ENCODE measurements at regions of chr4 and their contacts with region 1.

Region 1: DNA sequence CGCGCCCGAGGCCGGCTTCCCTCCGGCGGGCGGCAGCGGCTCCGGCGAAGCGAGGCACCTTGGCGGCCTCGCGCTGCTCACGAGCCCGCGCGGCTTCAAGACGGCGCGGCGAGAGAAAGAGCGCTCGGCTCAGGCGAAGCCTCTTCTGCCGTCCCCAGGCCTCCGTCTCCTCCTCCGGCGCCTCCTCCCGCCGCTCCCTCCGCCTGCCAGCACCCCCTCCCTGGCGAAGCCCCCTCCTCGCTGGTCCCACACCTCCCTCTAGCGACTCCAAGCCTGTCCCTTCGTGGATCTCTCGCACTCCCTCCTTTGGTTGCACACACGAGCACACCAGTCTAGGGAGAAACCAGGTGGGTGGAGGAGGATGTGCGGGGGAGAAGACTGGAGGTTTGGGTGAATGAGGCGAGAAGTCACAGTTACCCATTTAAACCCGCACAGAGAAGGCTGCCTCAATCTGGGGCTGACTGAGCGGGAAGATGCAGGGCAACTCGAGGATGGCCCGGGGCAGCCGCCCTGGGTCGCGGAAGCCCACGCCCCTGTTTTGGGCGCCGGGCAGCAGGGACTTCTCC is at the start of gene CAMK2D:
- DNase-seq: peak; percentile 89
- ATAC-seq: peak; percentile 50
- H3K4me3 ChIP-seq: peak within 1 kb of the TSS; percentile 93
- H3K27ac ChIP-seq: peak within 1 kb of the TSS; percentile 90
- H3K4me1 ChIP-seq: 0 out of 2 replicates have a peak, but pooled peaks cover 1% of the 10 kb centered on the region
- H3K27me3 ChIP-seq: no peaks in the 10 kb centered on the region
- CTCF ChIP-seq: peak; percentile 75
- POLR2A ChIP-seq: no peak; the same call in 1 of the 2 replicates
- RAD21 ChIP-seq: peak; percentile 66
- total RNA-seq, gene CAMK2D: 156 and 181 TPM in 2 replicates

Region 2: GRCh38 chr4:112956484-112956896 is 805.2 kb before region 1 on chr4:
- CTCF ChIA-PET with region 1: no interaction called
- POLR2A ChIA-PET with region 1: no interaction called
- dilution Hi-C with region 1: no loop called
- in situ Hi-C with region 1: no loop called
- intact Hi-C with region 1: no loop called
- DNase-seq: no peak
- ATAC-seq: no peak
- H3K4me3 ChIP-seq: no peak overlapping the region
- H3K27ac ChIP-seq: no peak overlapping the region
- H3K4me1 ChIP-seq: no peaks in the 10 kb centered on the region
- H3K27me3 ChIP-seq: no peaks in the 10 kb centered on the region
- CTCF ChIP-seq: no peak
- POLR2A ChIP-seq: no peak
- RAD21 ChIP-seq: no peak

Region 3: DNA sequence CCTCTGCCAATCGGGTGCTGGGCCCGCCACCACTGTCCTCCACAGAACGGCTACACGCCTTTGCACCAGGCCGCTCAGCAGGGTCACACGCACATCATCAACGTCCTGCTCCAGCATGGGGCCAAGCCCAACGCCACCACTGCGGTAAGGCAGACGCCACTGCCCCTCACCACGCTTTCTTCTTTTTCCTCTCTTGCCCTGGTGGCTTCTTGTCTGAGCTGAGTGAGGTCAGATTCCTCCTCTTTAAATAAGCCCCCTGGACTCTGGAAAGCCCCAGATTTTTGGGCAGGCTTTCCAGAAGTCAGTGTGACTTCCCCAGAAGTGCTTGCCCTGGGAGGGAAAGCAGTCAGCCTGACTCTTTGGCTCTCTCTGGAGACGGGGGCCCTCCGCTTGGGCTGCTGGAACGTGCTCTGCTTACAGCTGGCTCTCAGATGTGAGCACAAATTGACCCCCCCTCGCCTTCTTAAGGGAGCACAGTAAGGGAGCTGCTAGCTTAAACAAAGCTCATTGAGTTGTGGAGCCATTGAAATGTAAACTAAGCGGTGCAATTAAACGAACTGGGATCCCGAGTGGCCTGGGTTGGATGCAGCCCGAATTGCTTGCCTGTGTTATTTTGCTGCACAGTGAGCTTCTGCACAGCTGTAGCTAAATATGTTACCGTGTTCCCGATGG is 469.2 kb before region 1 on chr4:
- CTCF ChIA-PET with region 1: no interaction called
- POLR2A ChIA-PET with region 1: no interaction called
- dilution Hi-C with region 1: no loop called
- in situ Hi-C with region 1: no loop called
- intact Hi-C with region 1: loop called (anchors 5 kb)
- DNase-seq: peak; percentile 71
- ATAC-seq: peak; percentile 82
- H3K4me3 ChIP-seq: no peak overlapping the region
- H3K27ac ChIP-seq: peak overlapping the region; percentile 66; the same call in 1 of the 2 replicates
- H3K4me1 ChIP-seq: peaks cover 5% of the 10 kb centered on the region
- H3K27me3 ChIP-seq: no peaks in the 10 kb centered on the region
- CTCF ChIP-seq: no peak
- POLR2A ChIP-seq: no peak
- RAD21 ChIP-seq: no peak

Region 4: GRCh38 chr4:113547487-113548042 is 214.1 kb before region 1 on chr4:
- CTCF ChIA-PET with region 1: interaction called, 3 read pairs
- POLR2A ChIA-PET with region 1: no interaction called
- dilution Hi-C with region 1: no loop called
- in situ Hi-C with region 1: loop called (anchors 10 kb)
- intact Hi-C with region 1: loop called (anchors 1 kb)
- DNase-seq: peak; percentile 95
- ATAC-seq: peak; percentile 99
- H3K4me3 ChIP-seq: no peak overlapping the region
- H3K27ac ChIP-seq: no peak overlapping the region
- H3K4me1 ChIP-seq: no peaks in the 10 kb centered on the region
- H3K27me3 ChIP-seq: no peaks in the 10 kb centered on the region
- CTCF ChIP-seq: peak; percentile 90
- POLR2A ChIP-seq: no peak
- RAD21 ChIP-seq: peak; percentile 78

Region 5: GRCh38 chr4:113958766-113959538 is 197.2 kb after region 1 on chr4:
- CTCF ChIA-PET with region 1: no interaction called
- POLR2A ChIA-PET with region 1: no interaction called
- dilution Hi-C with region 1: no loop called
- in situ Hi-C with region 1: no loop called
- intact Hi-C with region 1: loop called (anchors 5 kb)
- DNase-seq: peak; percentile 97
- ATAC-seq: peak; percentile 82
- H3K4me3 ChIP-seq: no peak overlapping the region
- H3K27ac ChIP-seq: peak overlapping the region; percentile 91
- H3K4me1 ChIP-seq: peaks cover 13% of the 10 kb centered on the region
- H3K27me3 ChIP-seq: no peaks in the 10 kb centered on the region
- CTCF ChIP-seq: no peak
- POLR2A ChIP-seq: peak; percentile 48; the same call in 1 of the 2 replicates
- RAD21 ChIP-seq: no peak

Region 6: DNA sequence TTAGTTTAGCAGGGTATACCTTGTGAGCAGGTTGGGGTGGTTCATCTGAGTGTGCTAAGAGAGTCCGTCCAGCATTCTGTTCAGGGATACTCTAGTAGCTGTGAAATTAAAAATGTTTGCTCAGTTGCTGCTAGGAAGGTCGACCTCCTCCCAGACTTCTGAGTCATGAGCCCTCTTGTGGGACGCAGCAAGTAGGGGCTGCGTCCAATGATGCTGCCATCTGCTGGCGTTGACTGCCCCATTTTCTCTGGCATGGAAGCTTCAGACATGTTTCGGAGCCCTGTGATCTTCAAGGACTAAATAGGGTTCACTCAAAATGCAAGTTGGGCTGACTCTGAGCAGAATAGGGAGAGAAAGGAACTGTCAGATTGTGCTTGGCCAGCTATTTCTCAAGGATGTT is 418.8 kb after region 1 on chr4:
- CTCF ChIA-PET with region 1: no interaction called
- POLR2A ChIA-PET with region 1: no interaction called
- dilution Hi-C with region 1: no loop called
- in situ Hi-C with region 1: no loop called
- intact Hi-C with region 1: loop called (anchors 10 kb)
- DNase-seq: peak; percentile 85
- ATAC-seq: peak; percentile 95
- H3K4me3 ChIP-seq: no peak overlapping the region
- H3K27ac ChIP-seq: no peak overlapping the region
- H3K4me1 ChIP-seq: 0 out of 2 replicates have a peak, but pooled peaks cover 2% of the 10 kb centered on the region
- H3K27me3 ChIP-seq: no peaks in the 10 kb centered on the region
- CTCF ChIP-seq: peak; percentile 74
- POLR2A ChIP-seq: no peak
- RAD21 ChIP-seq: peak; percentile 76

Region 7: DNA sequence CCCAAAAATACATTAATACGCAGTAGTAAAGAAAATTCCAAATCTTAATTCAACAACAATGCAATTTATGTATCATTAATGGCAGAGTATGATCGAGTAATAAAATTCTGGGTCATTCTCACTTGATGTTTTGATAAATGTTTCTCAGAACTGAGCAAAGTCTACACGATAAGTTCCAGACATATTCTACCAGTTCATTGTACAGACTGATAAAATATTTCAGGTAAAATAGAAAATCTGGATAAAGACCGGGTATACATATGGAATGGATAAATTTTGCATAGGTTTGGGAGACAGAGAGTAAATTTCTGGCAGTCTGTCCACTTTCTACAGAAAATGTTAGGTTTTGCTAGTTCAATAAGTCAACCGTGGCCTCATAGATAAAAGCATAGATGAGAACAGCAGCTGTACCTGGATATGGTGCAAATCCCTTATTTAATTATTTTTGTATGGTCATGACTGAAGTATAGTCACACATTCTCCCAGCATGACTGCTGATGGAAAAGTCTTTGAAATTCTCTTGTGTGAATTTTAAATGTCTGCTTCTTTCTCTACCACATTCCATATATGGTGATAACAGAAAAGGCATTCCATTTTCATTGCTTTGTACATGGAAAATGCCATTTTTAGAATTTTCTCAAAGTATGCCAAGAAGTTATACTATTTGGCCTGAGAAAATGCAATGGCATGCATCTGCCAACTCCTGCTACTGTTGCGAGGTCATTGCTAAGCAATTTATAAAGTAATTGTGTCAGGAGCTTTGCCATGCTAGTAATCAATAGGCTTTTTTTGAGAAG is 519.7 kb after region 1 on chr4:
- CTCF ChIA-PET with region 1: no interaction called
- POLR2A ChIA-PET with region 1: no interaction called
- dilution Hi-C with region 1: no loop called
- in situ Hi-C with region 1: no loop called
- intact Hi-C with region 1: loop called (anchors 5 kb)
- DNase-seq: peak; percentile 91
- ATAC-seq: peak; percentile 82
- H3K4me3 ChIP-seq: no peak overlapping the region
- H3K27ac ChIP-seq: peak overlapping the region; percentile 78; the same call in 1 of the 2 replicates
- H3K4me1 ChIP-seq: peaks cover 3% of the 10 kb centered on the region; the same call in 1 of the 2 replicates
- H3K27me3 ChIP-seq: no peaks in the 10 kb centered on the region
- CTCF ChIP-seq: no peak
- POLR2A ChIP-seq: no peak
- RAD21 ChIP-seq: no peak

Region 8: GRCh38 chr4:114386637-114387233 is 625.0 kb after region 1 on chr4:
- CTCF ChIA-PET with region 1: no interaction called
- POLR2A ChIA-PET with region 1: no interaction called
- dilution Hi-C with region 1: no loop called
- in situ Hi-C with region 1: no loop called
- intact Hi-C with region 1: loop called (anchors 2 kb)
- DNase-seq: peak; percentile 60
- ATAC-seq: peak; percentile 51; the same call in 1 of the 2 replicates
- H3K4me3 ChIP-seq: no peak overlapping the region
- H3K27ac ChIP-seq: no peak overlapping the region
- H3K4me1 ChIP-seq: peaks cover 4% of the 10 kb centered on the region; the same call in 1 of the 2 replicates
- H3K27me3 ChIP-seq: peaks cover 18% of the 10 kb centered on the region
- CTCF ChIP-seq: peak; percentile 85
- POLR2A ChIP-seq: no peak
- RAD21 ChIP-seq: peak; percentile 85